WTC11 (cell line): ENCODE measurements at regions of chr6 and their contacts with region 1.

Region 1: GRCh38 chr6:142474531-142475289 is 172.9 kb downstream of the ADGRG6 start:
- DNase-seq: peak; percentile 85
- ATAC-seq: peak; percentile 98
- H3K4me3 Mint-ChIP-seq: peak overlapping the region; percentile 39
- H3K27ac Mint-ChIP-seq: no peak overlapping the region
- H3K4me1 Mint-ChIP-seq: peaks cover 7% of the 10 kb centered on the region
- H3K27me3 Mint-ChIP-seq: no peaks in the 10 kb centered on the region
- CTCF ChIP-seq: peak; percentile 74

Region 2: DNA sequence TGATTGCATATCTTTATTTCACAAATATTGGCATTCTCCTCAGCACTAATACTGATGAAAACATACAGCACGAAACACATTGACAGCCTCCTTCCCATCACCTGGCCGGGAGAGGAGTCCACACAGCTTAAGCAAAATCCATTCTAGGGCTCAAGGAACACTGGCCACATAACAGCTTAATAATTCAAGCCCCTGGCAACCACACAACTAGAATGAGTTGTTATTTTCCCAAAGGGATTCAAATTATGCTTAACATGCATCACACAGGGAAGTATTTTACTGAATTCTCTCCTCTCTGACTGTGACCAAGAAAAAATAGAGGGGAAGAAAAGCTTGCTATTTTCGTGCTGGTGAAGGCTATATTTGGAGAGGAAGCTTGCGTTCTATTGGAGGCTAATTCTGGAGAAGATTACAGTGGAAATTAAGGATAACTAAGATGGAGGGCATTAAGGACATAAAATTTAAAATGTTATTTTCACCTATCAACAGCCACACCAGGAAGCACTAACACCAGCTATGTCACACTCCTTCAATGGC is 25.6 kb after region 1 on chr6:
- CTCF ChIA-PET with region 1: interaction called, 15 read pairs
- POLR2A ChIA-PET with region 1: interaction called, 5 read pairs
- DNase-seq: no peak
- ATAC-seq: no peak
- H3K4me3 Mint-ChIP-seq: no peak overlapping the region
- H3K27ac Mint-ChIP-seq: no peak overlapping the region
- H3K4me1 Mint-ChIP-seq: no peaks in the 10 kb centered on the region
- H3K27me3 Mint-ChIP-seq: no peaks in the 10 kb centered on the region
- CTCF ChIP-seq: no peak

Region 3: DNA sequence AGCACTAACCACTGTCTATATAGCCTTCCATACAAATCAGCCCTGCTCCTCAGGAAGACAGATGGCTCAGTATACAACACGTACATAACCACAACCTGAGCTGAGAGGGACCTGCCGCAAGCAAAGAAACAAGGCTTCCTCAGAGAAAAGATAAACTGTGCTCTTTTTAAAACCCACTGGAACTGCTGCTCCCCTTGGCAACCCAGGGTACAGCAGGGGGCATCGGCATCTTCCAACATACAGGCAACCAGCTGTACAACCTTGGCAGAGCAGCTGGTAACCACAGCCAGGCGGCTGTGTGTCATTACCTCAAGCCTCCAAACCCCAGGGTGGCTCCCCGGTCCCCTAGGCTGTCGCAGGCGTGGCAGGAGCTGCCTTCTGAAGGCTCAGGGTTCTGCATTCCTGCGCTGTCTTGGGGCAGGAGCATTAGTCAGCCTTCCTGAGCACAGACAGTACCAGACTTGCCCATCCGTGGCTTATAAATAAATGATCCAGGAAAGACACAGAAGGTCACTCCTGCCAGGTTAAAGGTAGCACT is 76.6 kb after region 1 on chr6:
- CTCF ChIA-PET with region 1: interaction called, 17 read pairs
- POLR2A ChIA-PET with region 1: no interaction called
- DNase-seq: peak; percentile 12
- ATAC-seq: peak; percentile 78
- H3K4me3 Mint-ChIP-seq: no peak overlapping the region
- H3K27ac Mint-ChIP-seq: no peak overlapping the region
- H3K4me1 Mint-ChIP-seq: peaks cover 29% of the 10 kb centered on the region
- H3K27me3 Mint-ChIP-seq: no peaks in the 10 kb centered on the region
- CTCF ChIP-seq: no peak

Region 4: DNA sequence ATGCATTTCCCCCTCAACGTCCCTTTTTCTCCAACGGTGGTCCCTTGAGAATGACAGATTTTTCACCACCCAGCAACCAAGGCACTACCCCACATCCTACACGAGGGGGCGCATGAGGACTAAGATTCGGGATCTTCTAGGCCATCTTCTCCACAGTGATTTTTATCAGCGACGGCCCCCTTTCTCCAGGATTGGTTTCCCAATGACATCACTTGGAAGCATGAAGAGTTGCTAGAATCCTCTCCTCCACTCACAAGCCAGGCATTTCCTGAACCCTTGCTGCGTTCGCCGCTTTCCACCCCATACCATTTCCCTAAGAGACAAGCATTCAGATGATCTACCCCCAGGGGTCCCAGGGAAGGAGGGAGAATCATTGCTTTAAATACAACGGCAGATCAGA is 218.2 kb after region 1 on chr6:
- CTCF ChIA-PET with region 1: interaction called, 11 read pairs
- POLR2A ChIA-PET with region 1: no interaction called
- DNase-seq: peak; percentile 71
- ATAC-seq: peak; percentile 92
- H3K4me3 Mint-ChIP-seq: peak overlapping the region; percentile 30; the same call in 1 of the 2 replicates
- H3K27ac Mint-ChIP-seq: peak overlapping the region; percentile 39; the same call in 1 of the 2 replicates
- H3K4me1 Mint-ChIP-seq: peaks cover 23% of the 10 kb centered on the region
- H3K27me3 Mint-ChIP-seq: no peaks in the 10 kb centered on the region
- CTCF ChIP-seq: peak; percentile 86

Region 5: GRCh38 chr6:143026696-143027449 is 552.2 kb after region 1 on chr6:
- CTCF ChIA-PET with region 1: interaction called, 35 read pairs
- POLR2A ChIA-PET with region 1: no interaction called
- DNase-seq: peak; percentile 62
- ATAC-seq: peak; percentile 93
- H3K4me3 Mint-ChIP-seq: no peak overlapping the region
- H3K27ac Mint-ChIP-seq: no peak overlapping the region
- H3K4me1 Mint-ChIP-seq: no peaks in the 10 kb centered on the region
- H3K27me3 Mint-ChIP-seq: no peaks in the 10 kb centered on the region
- CTCF ChIP-seq: peak; percentile 36; the same call in 1 of the 2 replicates

Region 6: GRCh38 chr6:143337201-143337949 is 862.7 kb after region 1 on chr6:
- CTCF ChIA-PET with region 1: interaction called, 26 read pairs
- POLR2A ChIA-PET with region 1: no interaction called
- DNase-seq: peak; percentile 95
- ATAC-seq: peak; percentile 99
- H3K4me3 Mint-ChIP-seq: no peak overlapping the region
- H3K27ac Mint-ChIP-seq: no peak overlapping the region
- H3K4me1 Mint-ChIP-seq: peaks cover 12% of the 10 kb centered on the region
- H3K27me3 Mint-ChIP-seq: no peaks in the 10 kb centered on the region
- CTCF ChIP-seq: peak; percentile 88